AG04450 (cell line): ENCODE measurements at regions of chr9 and their contacts with region 1.

Region 1: GRCh38 chr9:69193685-69194032 is 19.6 kb downstream of the TJP2 start:
- DNase-seq: no peak
- H3K4me3 ChIP-seq: no peak overlapping the region
- H3K27ac ChIP-seq: no peak overlapping the region
- H3K27me3 ChIP-seq: no peaks in the 10 kb centered on the region
- CTCF ChIP-seq: peak; percentile 13; the same call in 1 of the 2 replicates

Region 2: GRCh38 chr9:69035438-69036308 is 158.0 kb before region 1 on chr9 and contains the start of gene FXN:
- CTCF ChIA-PET with region 1: interaction called, 37 read pairs
- POLR2A ChIA-PET with region 1: interaction called, 4 read pairs
- DNase-seq: peak; percentile 37
- H3K4me3 ChIP-seq: peak within 1 kb of the TSS; percentile 96
- H3K27ac ChIP-seq: peak within 1 kb of the TSS; percentile 31
- H3K27me3 ChIP-seq: no peaks in the 10 kb centered on the region
- CTCF ChIP-seq: peak; percentile 97
- polyA plus RNA-seq, gene FXN: 16.1 and 18.0 TPM in 2 replicates

Region 3: DNA sequence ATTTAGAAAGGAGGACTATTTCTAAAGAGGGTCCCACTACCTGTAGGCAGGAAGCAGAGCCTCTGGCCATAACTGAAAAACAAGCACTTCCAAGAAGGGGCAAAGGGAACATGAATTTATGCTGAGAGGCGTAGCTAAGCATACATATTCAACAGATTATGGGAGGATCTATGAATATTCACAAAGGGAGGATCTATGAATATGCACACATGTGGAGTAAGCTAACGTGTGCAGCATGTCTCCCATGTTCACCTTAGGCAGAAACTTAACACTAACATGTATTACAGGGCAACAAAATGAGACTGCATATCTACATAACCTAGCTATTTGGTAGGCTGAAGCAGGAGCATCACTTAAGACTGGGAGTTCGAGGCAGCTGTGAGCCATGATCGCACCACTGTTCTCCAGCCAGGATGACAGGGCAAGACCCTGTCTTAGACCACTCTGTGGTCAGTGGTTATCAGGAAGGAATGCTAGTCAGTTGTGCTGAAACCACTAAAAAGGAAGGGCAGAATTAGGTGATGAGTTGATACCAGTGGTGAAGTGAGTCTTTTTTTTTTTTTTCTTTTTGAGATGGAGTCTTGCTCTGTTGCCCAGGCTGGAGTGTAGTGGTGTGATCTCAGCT is 137.4 kb before region 1 on chr9:
- CTCF ChIA-PET with region 1: interaction called, 324 read pairs
- POLR2A ChIA-PET with region 1: interaction called, 4 read pairs
- DNase-seq: no peak
- H3K4me3 ChIP-seq: no peak overlapping the region
- H3K27ac ChIP-seq: no peak overlapping the region
- H3K27me3 ChIP-seq: no peaks in the 10 kb centered on the region
- CTCF ChIP-seq: no peak

Region 4: DNA sequence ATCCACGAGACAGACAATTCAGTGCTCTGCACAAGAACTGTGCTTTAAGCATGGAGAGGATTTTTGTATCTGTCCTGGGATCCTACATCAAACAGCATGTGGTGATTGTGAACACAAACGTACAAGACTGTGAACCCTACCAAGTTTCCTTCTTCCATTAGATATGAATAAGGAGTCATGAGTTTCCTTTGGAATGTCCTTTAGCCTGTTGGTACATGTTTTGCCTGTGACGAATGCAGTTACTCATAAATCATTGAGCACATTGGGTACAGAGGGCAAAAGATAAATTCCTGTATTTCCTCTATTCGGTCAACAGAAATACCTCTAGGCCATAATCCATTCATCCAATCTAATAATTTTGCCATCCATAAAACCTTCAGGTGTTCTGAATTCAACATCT is 96.6 kb before region 1 on chr9:
- CTCF ChIA-PET with region 1: interaction called, 12 read pairs
- POLR2A ChIA-PET with region 1: interaction called, 3 read pairs
- DNase-seq: no peak
- H3K4me3 ChIP-seq: no peak overlapping the region
- H3K27ac ChIP-seq: peak overlapping the region; percentile 63
- H3K27me3 ChIP-seq: no peaks in the 10 kb centered on the region
- CTCF ChIP-seq: no peak

Region 5: GRCh38 chr9:69168709-69169217 is 24.9 kb before region 1 on chr9:
- CTCF ChIA-PET with region 1: interaction called, 12 read pairs
- POLR2A ChIA-PET with region 1: no interaction called
- DNase-seq: no peak
- H3K4me3 ChIP-seq: no peak overlapping the region
- H3K27ac ChIP-seq: no peak overlapping the region
- H3K27me3 ChIP-seq: no peaks in the 10 kb centered on the region
- CTCF ChIP-seq: no peak

Region 6: DNA sequence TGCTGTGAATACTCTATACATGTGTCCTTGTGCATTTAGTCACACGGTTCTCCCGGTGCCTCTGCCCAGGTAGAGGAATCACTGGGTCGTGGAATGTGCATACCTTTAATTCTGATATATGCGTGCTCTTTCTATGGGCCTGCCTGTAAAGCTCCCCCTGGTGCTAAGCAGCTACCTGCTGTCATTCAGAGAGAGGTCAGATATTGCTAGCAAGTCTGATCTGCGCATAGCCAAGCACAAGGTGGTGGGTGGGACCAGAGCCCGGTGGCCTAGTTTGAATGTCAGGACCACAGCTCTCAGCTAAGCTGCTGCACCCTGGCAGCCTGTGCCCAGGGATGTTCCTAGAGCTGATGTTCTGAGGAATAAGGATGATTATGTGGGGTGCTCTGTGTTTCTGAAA is 13.8 kb after region 1 on chr9:
- CTCF ChIA-PET with region 1: interaction called, 61 read pairs
- POLR2A ChIA-PET with region 1: no interaction called
- DNase-seq: no peak
- H3K4me3 ChIP-seq: no peak overlapping the region
- H3K27ac ChIP-seq: no peak overlapping the region
- H3K27me3 ChIP-seq: no peaks in the 10 kb centered on the region
- CTCF ChIP-seq: peak; percentile 7; the same call in 1 of the 2 replicates

Region 7: DNA sequence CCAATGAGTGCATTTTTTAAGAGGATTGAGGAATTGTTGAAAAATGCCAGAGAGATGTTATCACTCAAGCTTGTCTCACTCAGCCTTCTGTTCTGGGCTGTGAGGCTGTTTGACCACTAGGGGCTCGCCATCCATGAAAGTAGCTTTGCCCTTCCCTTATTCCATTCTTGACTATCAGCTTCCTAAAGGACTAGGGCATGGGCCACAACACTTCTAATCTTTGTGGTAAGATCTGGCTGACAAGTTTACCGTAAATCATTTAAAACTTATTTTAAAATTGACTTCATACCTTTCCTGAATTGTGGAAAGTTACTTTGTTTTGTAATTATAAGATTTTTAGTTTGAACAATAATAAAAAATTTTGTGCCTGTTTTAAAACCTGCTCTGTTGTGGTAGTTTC is 29.9 kb after region 1 on chr9:
- CTCF ChIA-PET with region 1: interaction called, 11 read pairs
- POLR2A ChIA-PET with region 1: no interaction called
- DNase-seq: peak; percentile 50
- H3K4me3 ChIP-seq: no peak overlapping the region
- H3K27ac ChIP-seq: no peak overlapping the region
- H3K27me3 ChIP-seq: no peaks in the 10 kb centered on the region
- CTCF ChIP-seq: peak; percentile 87